CD4-positive, alpha-beta memory T cell (primary cell): ENCODE measurements at regions of chr19 and their contacts with region 1.

Region 1: DNA sequence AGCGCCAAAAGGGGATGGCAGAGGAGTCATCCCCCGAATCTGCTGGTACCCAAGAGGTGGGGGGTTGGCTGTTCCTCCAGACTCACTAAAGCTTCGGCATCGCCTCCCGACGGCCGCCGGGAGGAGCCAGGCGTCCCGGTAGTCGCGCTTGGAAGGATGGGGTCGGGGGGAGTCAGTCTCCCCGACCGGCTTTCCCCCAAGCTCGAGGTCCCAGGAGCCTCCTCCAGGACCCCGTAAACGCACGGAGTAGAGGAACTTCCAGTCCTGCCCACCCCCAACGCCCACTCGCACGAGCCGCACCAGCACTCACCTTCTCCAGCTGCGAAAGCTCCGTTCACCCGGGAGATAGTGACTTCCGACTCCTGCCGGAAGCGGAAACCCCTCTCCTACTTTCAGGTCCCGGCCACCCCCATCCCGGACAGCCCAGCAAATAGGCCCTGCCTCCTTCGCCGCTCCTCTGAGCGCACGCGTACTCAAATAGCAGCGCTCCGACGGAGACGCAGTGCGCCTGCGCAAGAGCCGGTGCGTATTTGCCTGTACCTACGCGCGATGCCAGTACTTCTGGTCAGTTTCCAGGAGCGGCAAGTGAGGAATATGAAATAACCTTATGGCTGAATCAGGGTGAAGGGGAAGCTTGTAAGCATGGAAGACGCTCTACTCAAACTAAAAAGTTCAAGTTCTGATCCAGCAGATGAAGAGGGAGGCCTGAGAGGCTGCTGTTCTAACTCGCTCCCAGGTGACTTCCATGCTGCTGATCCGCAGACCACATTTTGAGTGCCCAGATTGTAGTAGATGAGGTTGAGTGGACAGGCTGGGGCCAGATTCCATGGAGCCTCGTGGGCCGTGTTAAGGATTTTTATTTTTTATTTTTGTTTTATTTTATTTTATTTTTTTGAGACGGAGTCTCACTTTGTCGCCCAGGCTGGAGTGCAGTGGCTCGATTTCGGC is at the start of gene ELOF1:
- DNase-seq: peak; percentile 95 to 98 (median 96)
- H3K4me3 ChIP-seq: peak within 1 kb of the TSS; percentile 59 to 91
- H3K4me3 Mint-ChIP-seq: peak within 1 kb of the TSS; percentile 95 to 99 (median 98)
- H3K27ac ChIP-seq: peak within 1 kb of the TSS; percentile 72
- H3K27ac Mint-ChIP-seq: peak within 1 kb of the TSS; percentile 73 to 99 (median 98)
- H3K4me1 ChIP-seq: peaks cover 31% of the 10 kb centered on the region
- H3K4me1 Mint-ChIP-seq: peaks cover 28 to 54% (median 43%) of the 10 kb centered on the region in 4 donors
- H3K27me3 ChIP-seq: no peaks in the 10 kb centered on the region
- H3K27me3 Mint-ChIP-seq: no peaks in the 10 kb centered on the region
- total RNA-seq, gene ELOF1: 46.0 to 48.5 TPM

Region 2: DNA sequence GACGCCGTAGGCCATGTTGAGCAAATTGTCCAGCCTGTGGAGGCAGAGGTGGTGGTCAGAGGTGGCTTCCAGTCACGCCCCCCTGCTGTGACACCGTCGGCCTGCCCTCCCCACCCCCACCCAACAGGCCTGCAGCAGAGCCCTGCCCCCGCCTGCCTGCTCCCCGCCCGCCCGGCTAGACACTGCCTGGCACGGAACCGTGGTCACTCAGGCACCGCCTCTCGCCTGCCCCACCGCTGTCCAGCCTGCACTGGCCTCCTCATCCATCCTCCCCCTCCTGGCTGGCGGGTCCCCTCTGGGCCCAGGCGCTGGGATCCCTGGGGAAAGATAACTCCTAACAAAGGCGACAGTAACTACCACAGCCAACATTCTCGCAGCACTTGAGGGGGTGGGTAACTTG is 102.0 kb before region 1 on chr19:
- CTCF ChIA-PET with region 1: no interaction called
- POLR2A ChIA-PET with region 1: no interaction called
- intact Hi-C with region 1: no loop called
- DNase-seq: no peak
- H3K4me3 ChIP-seq: no peak overlapping the region
- H3K4me3 Mint-ChIP-seq: no peak overlapping the region
- H3K27ac ChIP-seq: no peak overlapping the region
- H3K27ac Mint-ChIP-seq: no peak overlapping the region
- H3K4me1 ChIP-seq: no peaks in the 10 kb centered on the region
- H3K4me1 Mint-ChIP-seq: peaks cover 0 to 1% (median 0%) of the 10 kb centered on the region in 4 donors
- H3K27me3 ChIP-seq: no peaks in the 10 kb centered on the region
- H3K27me3 Mint-ChIP-seq: peaks cover 9 to 13% of the 10 kb centered on the region in 2 donors

Region 3: DNA sequence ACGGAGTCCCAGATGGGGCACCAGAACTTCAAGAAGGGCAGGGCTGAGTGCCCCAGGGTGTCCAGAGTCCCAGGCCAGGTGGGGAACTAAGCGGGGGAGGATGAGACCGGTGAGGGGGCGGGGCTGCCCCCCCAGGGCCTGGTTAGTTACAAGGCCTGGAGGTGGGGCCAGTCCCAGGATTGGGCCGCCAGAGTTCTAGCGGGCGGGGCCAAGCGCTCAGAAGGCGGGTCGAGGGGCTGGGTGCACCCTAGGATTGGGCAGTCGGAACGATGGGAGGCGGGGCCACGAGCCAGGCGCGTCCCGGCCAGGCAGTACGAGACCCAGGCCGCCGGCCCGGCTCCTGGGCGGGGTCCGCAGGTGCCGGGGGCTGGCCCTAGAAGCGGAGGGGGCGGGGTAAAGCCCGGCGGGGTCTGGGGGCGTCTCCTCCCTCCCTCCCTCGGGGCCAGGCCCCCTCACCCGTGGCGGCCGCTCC is 54.1 kb before region 1 on chr19:
- CTCF ChIA-PET with region 1: no interaction called
- POLR2A ChIA-PET with region 1: interaction called, 6 read pairs
- intact Hi-C with region 1: loop called (anchors 1 kb)
- DNase-seq: peak; percentile 95 to 97 (median 96)
- H3K4me3 ChIP-seq: peak overlapping the region; percentile 59 to 71
- H3K4me3 Mint-ChIP-seq: peak overlapping the region; percentile 79 to 94 (median 86)
- H3K27ac ChIP-seq: peak overlapping the region; percentile 95
- H3K27ac Mint-ChIP-seq: peak overlapping the region; percentile 88 to 94 (median 92)
- H3K4me1 ChIP-seq: peaks cover 14% of the 10 kb centered on the region
- H3K4me1 Mint-ChIP-seq: peaks cover 15 to 28% (median 18%) of the 10 kb centered on the region in 4 donors
- H3K27me3 ChIP-seq: no peaks in the 10 kb centered on the region
- H3K27me3 Mint-ChIP-seq: no peaks in the 10 kb centered on the region

Region 4: GRCh38 chr19:11528551-11529341 is 30.4 kb before region 1 on chr19 and contains the start of gene ECSIT:
- CTCF ChIA-PET with region 1: interaction called, 3 read pairs
- POLR2A ChIA-PET with region 1: interaction called, 12 read pairs
- intact Hi-C with region 1: loop called (anchors 1 kb)
- DNase-seq: peak; percentile 90 to 95 (median 92)
- H3K4me3 ChIP-seq: peak within 1 kb of the TSS; percentile 70 to 83
- H3K4me3 Mint-ChIP-seq: peak within 1 kb of the TSS; percentile 94 to 99 (median 98)
- H3K27ac ChIP-seq: peak within 1 kb of the TSS; percentile 76
- H3K27ac Mint-ChIP-seq: peak within 1 kb of the TSS; percentile 91 to 98 (median 97)
- H3K4me1 ChIP-seq: peaks cover 15% of the 10 kb centered on the region
- H3K4me1 Mint-ChIP-seq: peaks cover 13 to 21% (median 18%) of the 10 kb centered on the region in 4 donors
- H3K27me3 ChIP-seq: no peaks in the 10 kb centered on the region
- H3K27me3 Mint-ChIP-seq: no peaks in the 10 kb centered on the region
- total RNA-seq, gene ECSIT: 39.5 to 46.2 TPM

Region 5: GRCh38 chr19:11535792-11536595 is 23.2 kb before region 1 on chr19:
- CTCF ChIA-PET with region 1: interaction called, 29 read pairs
- POLR2A ChIA-PET with region 1: interaction called, 11 read pairs
- intact Hi-C with region 1: no loop called
- DNase-seq: peak; percentile 74 to 82 (median 78)
- H3K4me3 ChIP-seq: peak overlapping the region; percentile 27 to 29
- H3K4me3 Mint-ChIP-seq: peak overlapping the region; percentile 62 to 87 (median 76)
- H3K27ac ChIP-seq: peak overlapping the region; percentile 21
- H3K27ac Mint-ChIP-seq: peak overlapping the region; percentile 20 to 92 (median 83)
- H3K4me1 ChIP-seq: peaks cover 15% of the 10 kb centered on the region
- H3K4me1 Mint-ChIP-seq: peaks cover 7 to 14% (median 9%) of the 10 kb centered on the region in 4 donors
- H3K27me3 ChIP-seq: peaks cover 7% of the 10 kb centered on the region
- H3K27me3 Mint-ChIP-seq: peaks cover 4 to 12% of the 10 kb centered on the region in 2 donors

Region 6: DNA sequence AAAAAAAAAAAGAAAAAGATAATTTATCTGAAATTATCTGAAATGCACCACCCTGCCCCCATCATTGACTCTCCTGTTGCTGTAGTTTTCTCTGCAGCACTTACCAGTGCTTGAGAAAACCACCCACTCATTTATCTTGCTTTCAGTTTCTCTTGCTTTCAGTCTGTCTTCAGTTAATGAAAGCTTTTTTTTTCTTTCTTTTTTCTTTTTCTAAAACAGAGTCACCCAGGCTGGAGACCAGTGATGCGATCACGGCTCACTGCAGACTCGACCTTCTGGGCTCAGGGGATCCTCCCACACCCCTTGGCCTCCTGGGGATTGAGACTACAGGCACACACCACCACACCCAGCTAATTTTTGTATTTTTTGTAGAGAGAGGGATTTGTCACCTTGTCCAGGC is 22.6 kb after region 1 on chr19:
- CTCF ChIA-PET with region 1: interaction called, 18 read pairs
- POLR2A ChIA-PET with region 1: interaction called, 23 read pairs
- intact Hi-C with region 1: no loop called
- DNase-seq: peak in 4 of 5 donors; percentile 29 to 47 (median 37)
- H3K4me3 ChIP-seq: no peak overlapping the region
- H3K4me3 Mint-ChIP-seq: peak overlapping the region; percentile 64 to 86 (median 79)
- H3K27ac ChIP-seq: peak overlapping the region; percentile 8
- H3K27ac Mint-ChIP-seq: peak overlapping the region; percentile 38 to 89 (median 77)
- H3K4me1 ChIP-seq: peaks cover 37% of the 10 kb centered on the region
- H3K4me1 Mint-ChIP-seq: peaks cover 16 to 30% (median 22%) of the 10 kb centered on the region in 4 donors
- H3K27me3 ChIP-seq: no peaks in the 10 kb centered on the region
- H3K27me3 Mint-ChIP-seq: no peaks in the 10 kb centered on the region

Region 7: GRCh38 chr19:11587302-11587974 is 28.3 kb after region 1 on chr19:
- CTCF ChIA-PET with region 1: interaction called, 10 read pairs
- POLR2A ChIA-PET with region 1: interaction called, 3 read pairs
- intact Hi-C with region 1: loop called (anchors 1 kb)
- DNase-seq: peak; percentile 63 to 75 (median 70)
- H3K4me3 ChIP-seq: no peak overlapping the region
- H3K4me3 Mint-ChIP-seq: no peak overlapping the region
- H3K27ac ChIP-seq: no peak overlapping the region
- H3K27ac Mint-ChIP-seq: peak overlapping the region in 3 of 7 donors; percentile 35 to 86 (median 82)
- H3K4me1 ChIP-seq: peaks cover 3% of the 10 kb centered on the region
- H3K4me1 Mint-ChIP-seq: peaks cover 0 to 10% (median 1%) of the 10 kb centered on the region in 4 donors
- H3K27me3 ChIP-seq: no peaks in the 10 kb centered on the region
- H3K27me3 Mint-ChIP-seq: peaks cover 0 to 2% of the 10 kb centered on the region in 2 donors

Region 8: DNA sequence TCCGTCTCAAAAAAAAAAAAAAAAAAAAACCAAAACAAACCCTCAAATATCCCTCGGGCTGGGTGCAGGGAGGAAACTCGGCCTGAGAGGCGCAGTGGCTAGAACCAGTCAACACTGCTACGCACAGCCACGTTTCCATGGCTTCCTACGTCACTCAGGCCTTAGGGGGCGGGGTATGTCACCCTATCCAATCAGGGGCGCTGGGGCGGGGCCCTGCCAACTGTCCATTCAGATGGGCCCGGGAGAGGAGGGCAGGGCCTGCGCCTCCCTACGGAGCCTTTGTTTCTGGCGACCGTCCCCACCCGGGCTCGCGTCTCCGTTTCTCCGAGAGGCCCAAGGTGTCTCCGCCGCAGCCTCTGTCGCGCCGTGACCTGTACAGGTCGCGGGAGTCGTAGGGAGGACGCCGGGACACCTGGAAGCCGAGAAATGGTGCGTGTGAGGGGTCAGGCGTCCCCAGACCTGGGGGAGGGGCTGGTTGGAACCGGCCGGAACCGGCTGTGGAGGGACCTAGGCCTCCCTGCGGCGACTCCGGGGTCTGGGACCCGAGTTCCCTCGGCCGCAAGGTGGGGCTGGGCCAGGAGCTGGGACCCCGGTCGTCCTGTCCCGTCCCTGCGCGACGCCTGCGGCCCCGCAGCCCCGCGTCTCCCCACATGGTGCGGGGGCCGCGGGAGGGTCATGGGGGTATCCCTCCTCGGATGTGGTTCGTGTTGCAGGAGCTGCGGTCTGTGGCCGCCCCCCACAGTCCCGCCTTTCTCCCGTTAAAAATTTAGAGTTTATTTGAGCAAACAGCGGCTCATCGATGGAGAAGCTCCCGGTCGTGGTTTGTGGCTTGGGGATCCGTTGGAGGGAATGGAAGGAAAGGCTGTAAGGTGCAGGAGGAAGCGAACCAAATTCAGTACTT is 38.3 kb after region 1 on chr19 and contains the start of gene ZNF627:
- CTCF ChIA-PET with region 1: no interaction called
- POLR2A ChIA-PET with region 1: interaction called, 4 read pairs
- intact Hi-C with region 1: loop called (anchors 2 kb)
- DNase-seq: peak; percentile 95 to 99 (median 96)
- H3K4me3 ChIP-seq: peak within 1 kb of the TSS; percentile 44 to 87
- H3K4me3 Mint-ChIP-seq: peak within 1 kb of the TSS; percentile 86 to 97 (median 92)
- H3K27ac ChIP-seq: peak within 1 kb of the TSS; percentile 77
- H3K27ac Mint-ChIP-seq: peak within 1 kb of the TSS; percentile 90 to 95 (median 93)
- H3K4me1 ChIP-seq: peaks cover 15% of the 10 kb centered on the region
- H3K4me1 Mint-ChIP-seq: peaks cover 9 to 31% (median 19%) of the 10 kb centered on the region in 4 donors
- H3K27me3 ChIP-seq: no peaks in the 10 kb centered on the region
- H3K27me3 Mint-ChIP-seq: no peaks in the 10 kb centered on the region
- total RNA-seq, gene ZNF627: 11.5 to 12.6 TPM

Region 9: DNA sequence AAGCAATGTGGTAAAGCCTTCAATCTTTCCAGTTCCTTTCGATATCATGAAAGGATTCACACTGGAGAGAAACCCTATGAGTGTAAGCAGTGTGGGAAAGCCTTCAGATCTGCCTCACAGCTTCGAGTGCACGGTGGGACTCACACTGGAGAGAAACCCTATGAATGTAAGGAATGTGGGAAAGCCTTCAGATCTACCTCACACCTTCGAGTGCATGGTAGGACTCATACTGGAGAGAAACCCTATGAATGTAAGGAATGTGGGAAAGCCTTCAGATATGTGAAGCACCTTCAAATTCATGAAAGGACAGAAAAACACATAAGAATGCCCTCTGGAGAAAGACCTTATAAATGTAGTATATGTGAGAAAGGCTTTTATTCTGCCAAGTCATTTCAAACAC is 390.0 kb after region 1 on chr19:
- CTCF ChIA-PET with region 1: no interaction called
- POLR2A ChIA-PET with region 1: no interaction called
- intact Hi-C with region 1: no loop called
- DNase-seq: peak in 3 of 5 donors; percentile 4 to 8 (median 5)
- H3K4me3 ChIP-seq: peak overlapping the region in 1 of 2 donors; percentile 27
- H3K4me3 Mint-ChIP-seq: peak overlapping the region in 1 of 8 donors; percentile 27
- H3K27ac ChIP-seq: no peak overlapping the region
- H3K27ac Mint-ChIP-seq: peak overlapping the region in 2 of 7 donors; percentile 23 to 65
- H3K4me1 ChIP-seq: no peaks in the 10 kb centered on the region
- H3K4me1 Mint-ChIP-seq: no peaks in the 10 kb centered on the region
- H3K27me3 ChIP-seq: no peaks in the 10 kb centered on the region
- H3K27me3 Mint-ChIP-seq: no peaks in the 10 kb centered on the region